ENCODE measurements at regions of chr15 and their contacts with region 1.

Region 1: GRCh38 chr15:39188925-39189324 is 392.0 kb upstream of the THBS1 start:
- DNase-seq: no peak
- H3K4me3 ChIP-seq: no peak overlapping the region
- H3K27ac ChIP-seq: no peak overlapping the region
- H3K4me1 ChIP-seq: no peaks in the 10 kb centered on the region
- H3K27me3 ChIP-seq: no peaks in the 10 kb centered on the region
- CTCF ChIP-seq: no peak
- EP300 ChIP-seq: no peak
- POLR2A ChIP-seq: no peak

Region 2: DNA sequence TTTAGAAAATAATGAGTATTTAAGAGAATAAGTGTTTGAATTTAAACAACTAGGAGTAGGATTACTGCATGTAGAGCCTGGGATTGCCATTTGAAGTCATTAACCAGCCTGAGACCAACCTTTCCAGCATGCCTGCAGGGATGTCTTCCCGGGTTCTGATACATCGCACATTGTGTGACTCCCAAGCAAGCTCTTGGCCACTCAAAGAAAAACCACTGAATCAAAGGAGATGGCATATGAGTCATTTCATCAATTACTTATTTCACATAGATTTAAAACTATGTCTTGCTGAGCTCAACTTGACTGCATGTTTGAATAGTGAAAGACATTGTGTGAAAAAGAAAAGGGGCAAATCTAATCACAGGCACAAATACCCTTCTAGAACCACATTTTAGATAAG is 376.9 kb after region 1 on chr15:
- in situ Hi-C with region 1: loop called in 1 of 4 experiments (anchors 5 kb)
- intact Hi-C with region 1: no loop called
- DNase-seq: no peak
- H3K4me3 ChIP-seq: no peak overlapping the region
- H3K27ac ChIP-seq: no peak overlapping the region
- H3K4me1 ChIP-seq: no peaks in the 10 kb centered on the region
- H3K27me3 ChIP-seq: no peaks in the 10 kb centered on the region
- CTCF ChIP-seq: no peak
- EP300 ChIP-seq: no peak
- POLR2A ChIP-seq: no peak

Measured in transverse colon (tissue), 4 donors.